Cardiac septum (tissue), 1 donor: ENCODE measurements at regions of chr2 and their contacts with region 1.

Region 1: DNA sequence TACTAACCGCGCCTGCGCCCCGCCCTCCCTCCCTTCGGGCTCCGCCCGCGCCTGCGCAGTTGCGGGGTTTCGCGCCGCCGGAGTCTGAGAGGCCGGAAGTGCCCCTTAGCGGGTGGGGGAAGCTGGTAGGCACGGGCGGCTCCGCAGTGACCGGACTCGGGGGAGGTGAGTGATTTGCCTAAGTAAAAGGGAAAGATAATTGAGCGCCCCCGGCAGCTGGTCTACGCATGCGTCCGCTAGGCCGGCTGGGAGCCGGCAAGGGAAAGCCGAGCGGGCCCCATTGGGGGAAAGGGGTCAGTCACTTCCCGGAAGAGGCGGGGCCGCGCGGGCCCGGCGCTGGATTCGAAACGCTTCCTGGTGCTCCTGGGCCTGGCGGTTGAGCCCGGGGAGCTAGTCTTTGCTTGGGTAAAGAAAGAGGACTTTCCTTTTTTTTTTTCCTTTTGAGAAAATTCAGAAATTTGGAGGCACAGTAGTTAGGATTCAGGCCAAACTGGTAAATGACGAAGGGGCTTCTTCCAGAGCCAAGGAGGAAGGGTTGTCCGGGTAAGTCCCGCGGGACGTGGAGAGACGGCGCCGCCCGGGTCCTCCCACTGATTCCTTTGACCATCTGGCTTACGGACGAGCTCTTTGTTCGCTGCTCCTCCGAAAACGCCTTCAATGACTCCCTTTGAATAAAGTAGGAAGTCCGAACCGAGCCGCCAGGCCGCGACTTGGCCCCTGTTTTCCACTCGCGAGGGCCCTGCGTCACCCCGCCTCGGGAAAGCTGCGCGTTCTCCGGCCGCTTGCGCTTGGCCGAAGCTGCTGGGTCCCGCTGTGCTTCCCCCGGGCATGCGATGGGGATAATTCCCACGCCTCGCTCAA is at the starts of genes GEN1 and SMC6:
- DNase-seq: peak; percentile 96
- total RNA-seq, gene GEN1: 2.7 TPM
- total RNA-seq, gene SMC6: 13.9 TPM

Region 2: GRCh38 chr2:17334300-17334699 is 419.7 kb before region 1 on chr2:
- intact Hi-C with region 1: no loop called
- DNase-seq: no peak

Region 3: GRCh38 chr2:17800219-17800618 is 46.2 kb after region 1 on chr2:
- intact Hi-C with region 1: no loop called
- DNase-seq: no peak

Region 4: GRCh38 chr2:17821535-17822444 is 67.8 kb after region 1 on chr2:
- intact Hi-C with region 1: loop called (anchors 5 kb)
- DNase-seq: no peak

Region 5: DNA sequence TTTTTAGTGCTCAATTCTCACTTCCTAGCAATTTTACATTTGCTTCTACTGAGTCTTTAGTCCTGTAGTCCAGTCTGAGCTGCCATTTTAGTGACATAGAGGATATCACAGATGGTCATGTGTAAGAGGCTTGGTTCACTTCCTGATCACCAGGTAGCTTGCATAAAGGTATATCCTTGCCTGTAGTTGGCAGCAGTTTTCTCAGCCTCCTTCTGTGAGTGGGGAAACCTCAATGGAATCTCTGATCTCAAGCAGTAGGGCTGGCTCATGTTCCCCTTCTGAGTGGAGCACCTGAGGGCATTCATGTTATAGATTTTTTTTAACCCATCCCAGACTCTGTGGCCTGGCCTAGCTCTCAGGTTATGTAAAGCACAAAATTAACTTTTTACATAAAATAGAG is 528.0 kb after region 1 on chr2:
- intact Hi-C with region 1: no loop called
- DNase-seq: no peak